ENCODE measurements at regions of chr1 and their contacts with region 1.

Region 1: DNA sequence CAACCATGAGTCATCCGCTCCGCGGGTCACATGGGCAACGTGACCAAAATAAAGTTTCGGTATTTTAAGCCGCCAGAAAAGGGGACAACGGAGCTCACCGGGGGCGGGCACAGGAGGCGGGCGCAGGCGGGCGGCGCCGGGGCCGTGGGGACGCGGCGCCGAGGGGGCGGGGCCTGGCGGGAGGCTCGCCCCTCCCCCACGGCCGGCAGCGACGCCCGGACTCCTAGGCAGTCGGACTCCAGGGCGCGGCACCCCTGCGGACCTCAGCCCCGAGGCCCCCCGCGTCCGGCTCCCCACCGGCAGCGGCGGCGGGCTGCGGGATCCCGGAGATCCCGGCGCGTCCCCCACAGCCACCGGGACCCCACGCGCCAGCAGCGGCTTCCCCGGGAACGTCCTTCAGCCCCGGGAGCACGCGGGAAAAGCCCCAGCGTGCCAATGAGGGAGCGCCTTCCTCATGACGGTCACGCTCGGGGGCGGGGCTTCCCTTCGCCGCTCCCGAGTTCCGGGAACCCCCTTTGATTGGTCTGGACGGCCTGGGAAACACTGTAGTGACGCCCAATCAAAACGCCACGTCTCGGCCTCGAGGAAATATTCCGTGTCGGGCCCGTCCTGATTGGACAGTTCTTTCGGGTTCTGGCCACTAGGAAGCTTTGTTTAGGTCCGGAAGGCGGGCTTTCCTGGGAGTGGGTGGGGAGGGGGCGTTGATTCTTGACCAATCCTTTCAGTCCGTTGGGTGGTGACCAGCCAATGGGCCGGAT is 515 bp upstream of the CAMTA1 start:
- DNase-seq: peak; percentile 99 to 100
- ATAC-seq: peak; percentile 96
- H3K4me3 ChIP-seq: peak overlapping the region; percentile 35 to 82
- H3K27ac ChIP-seq: peak overlapping the region; percentile 78 to 84
- H3K4me1 ChIP-seq: peaks cover 1 to 3% of the 10 kb centered on the region in 2 donors
- H3K27me3 ChIP-seq: no peaks in the 10 kb centered on the region

Region 2: DNA sequence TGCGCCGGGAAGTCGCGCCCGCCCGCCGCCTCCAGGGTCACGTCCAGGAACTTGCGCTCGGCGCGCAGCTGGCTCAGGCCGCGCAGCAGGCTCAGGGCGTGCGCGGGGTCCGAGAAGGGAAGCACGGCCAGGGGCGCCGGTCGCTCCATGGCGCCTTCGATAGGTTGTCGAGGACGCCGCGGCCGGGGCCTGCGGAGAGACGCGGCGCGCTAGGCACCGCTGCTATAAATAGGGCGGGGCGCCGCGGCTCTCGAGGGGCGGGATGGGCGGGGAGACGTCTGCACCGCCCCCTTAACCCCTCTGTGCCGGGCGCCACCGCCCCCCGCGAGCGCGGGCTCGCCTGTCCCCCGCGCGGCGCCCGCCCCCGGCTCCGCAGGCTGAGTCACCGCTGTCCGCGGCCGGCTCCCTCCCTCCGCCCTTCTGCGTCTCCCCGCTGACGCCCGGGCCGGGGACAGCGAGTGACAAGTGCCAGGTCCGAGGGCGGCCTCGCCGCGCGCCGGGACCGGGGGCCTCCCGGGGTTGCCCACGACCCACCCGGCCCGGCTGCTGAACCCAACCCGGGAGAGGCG is 182.0 kb before region 1 on chr1 and contains the start of gene KLHL21:
- intact Hi-C with region 1: loop called in 1 of 2 experiments (anchors 10 kb)
- DNase-seq: peak; percentile 95 to 97
- ATAC-seq: peak; percentile 89
- H3K4me3 ChIP-seq: peak within 1 kb of the TSS; percentile 57 to 70
- H3K27ac ChIP-seq: peak within 1 kb of the TSS; percentile 97 to 100
- H3K4me1 ChIP-seq: no peaks in the 10 kb centered on the region
- H3K27me3 ChIP-seq: peaks cover 0 to 2% of the 10 kb centered on the region in 2 donors
- total RNA-seq, gene KLHL21: 37.5 to 38.3 TPM

Region 3: GRCh38 chr1:6743189-6744101 is 41.3 kb before region 1 on chr1:
- intact Hi-C with region 1: loop called in 1 of 2 experiments (anchors 5 kb)
- DNase-seq: peak; percentile 78 to 80
- ATAC-seq: peak; percentile 90
- H3K4me3 ChIP-seq: no peak overlapping the region
- H3K27ac ChIP-seq: peak overlapping the region in 1 of 2 donors; percentile 66
- H3K4me1 ChIP-seq: no peaks in the 10 kb centered on the region
- H3K27me3 ChIP-seq: no peaks in the 10 kb centered on the region

Region 4: GRCh38 chr1:7070389-7071029 is 285.8 kb after region 1 on chr1:
- intact Hi-C with region 1: loop called in 1 of 2 experiments (anchors 10 kb)
- DNase-seq: peak in 1 of 2 donors; percentile 68
- ATAC-seq: peak; percentile 84
- H3K4me3 ChIP-seq: peak overlapping the region; percentile 6 to 51
- H3K27ac ChIP-seq: no peak overlapping the region
- H3K4me1 ChIP-seq: no peaks in the 10 kb centered on the region
- H3K27me3 ChIP-seq: no peaks in the 10 kb centered on the region